ENCODE measurements at regions of chr3 and their contacts with region 1.

Region 1: DNA sequence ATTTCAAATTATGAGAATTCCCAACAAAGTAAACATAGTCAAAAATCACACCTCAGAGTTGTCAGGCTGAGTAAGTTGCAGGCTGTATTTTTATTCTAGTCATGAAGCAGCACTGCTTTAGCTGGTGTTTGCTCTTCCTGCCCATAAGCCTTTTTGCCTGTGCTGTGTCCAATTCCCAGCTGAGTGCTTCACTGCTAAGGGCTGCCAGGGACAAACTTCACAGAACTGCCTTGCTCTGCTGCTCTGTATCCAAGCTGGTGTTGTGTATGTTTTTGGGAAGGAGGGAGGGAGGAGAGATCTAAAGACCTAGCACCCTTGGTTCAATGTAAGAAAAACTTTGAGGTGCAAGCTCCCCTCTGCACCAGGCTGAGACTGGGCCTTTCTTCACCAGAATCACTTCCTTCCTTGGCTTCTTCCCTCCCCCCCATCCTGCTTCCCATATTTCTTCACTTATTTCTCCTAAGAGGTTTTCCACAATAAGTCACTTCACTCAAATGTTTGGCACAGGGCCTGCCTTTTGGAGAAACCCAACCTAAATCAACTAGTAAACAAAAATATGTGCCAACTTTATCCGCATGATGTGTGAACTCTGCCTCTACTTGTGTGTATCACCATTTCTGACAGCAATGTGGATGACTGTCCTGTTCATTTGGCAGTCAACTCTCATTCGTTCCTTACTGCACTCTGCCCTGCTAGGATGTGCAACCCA is 156.1 kb downstream of the TBL1XR1 start:
- DNase-seq: peak in 3 of 10 donors; percentile 21 to 81 (median 26)

Region 2: GRCh38 chr3:178382449-178383061 is 1341.4 kb after region 1 on chr3:
- intact Hi-C with region 1: loop called (anchors 5 kb)
- DNase-seq: no peak